Posterior cingulate gyrus (tissue), 11 donors: ENCODE measurements at regions of chr7 and their contacts with region 1.

Region 1: GRCh38 chr7:130721486-130722280 is 12.3 kb downstream of the KLF14 start:
- DNase-seq: peak in 8 of 10 donors; percentile 59 to 94 (median 72)

Region 2: DNA sequence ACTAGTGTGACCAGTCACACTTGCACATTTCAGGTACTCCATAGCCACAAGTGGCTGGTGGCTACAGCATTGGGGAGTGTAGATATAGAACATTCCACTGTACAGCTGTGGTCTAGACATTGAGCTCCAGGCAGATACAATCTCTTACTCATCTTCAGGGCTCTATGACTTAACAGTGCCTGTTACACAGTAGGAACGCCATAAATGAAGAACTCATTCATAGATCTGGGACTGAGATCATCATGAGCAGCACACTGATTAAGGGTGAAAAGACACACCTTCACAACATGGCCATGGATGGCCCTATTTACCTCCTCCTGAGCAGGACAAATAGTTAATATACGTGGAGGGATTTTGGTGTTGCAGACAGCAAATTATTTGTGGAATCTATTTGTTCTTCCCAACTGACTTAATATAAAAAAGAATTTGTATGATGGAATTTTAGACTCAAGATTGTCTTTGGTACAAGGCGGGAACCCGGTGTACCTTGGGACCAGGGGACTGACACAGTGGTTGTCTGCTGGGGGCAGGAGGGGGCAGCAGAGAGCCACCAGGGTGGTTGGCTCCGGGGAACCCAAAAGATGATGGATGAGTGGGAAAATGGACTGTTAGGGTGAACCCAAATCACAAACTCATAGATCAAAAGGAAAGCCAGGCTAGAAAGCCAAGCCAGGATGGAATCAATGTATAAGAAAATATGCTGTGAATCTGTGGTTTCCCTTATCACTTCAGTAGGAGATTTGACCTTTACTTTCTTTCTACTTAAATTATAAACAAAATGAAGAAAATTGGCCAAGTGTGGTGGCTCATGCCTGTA is 479.3 kb before region 1 on chr7:
- intact Hi-C with region 1: loop called (anchors 10 kb)
- DNase-seq: peak in 7 of 10 donors; percentile 13 to 93 (median 49)